ENCODE measurements at regions of chr2 and their contacts with region 1.

Region 1: DNA sequence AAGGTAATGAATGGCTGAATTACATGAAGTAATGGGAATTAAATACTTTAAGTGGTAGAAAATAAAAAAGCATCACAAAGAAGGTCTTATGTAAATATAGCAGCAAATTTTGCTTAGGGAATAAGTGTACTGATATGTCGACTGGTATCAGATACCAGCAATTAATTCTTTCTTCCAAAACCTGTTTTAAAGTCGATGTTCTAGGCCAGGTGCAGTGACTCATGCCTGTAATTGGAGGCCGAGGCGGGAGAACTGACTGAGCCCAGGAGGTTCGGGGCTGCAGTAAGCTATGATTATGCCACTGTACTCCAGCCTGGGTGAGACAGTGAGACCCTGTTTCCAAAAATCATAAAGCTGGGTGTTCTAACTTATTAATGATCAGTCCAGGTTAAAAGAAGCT is 30.3 kb downstream of the SP3 start:
- DNase-seq: no peak
- ATAC-seq: peak; percentile 30
- H3K4me3 Mint-ChIP-seq: no peak overlapping the region
- H3K27ac Mint-ChIP-seq: no peak overlapping the region
- H3K4me1 Mint-ChIP-seq: peaks cover 40% of the 10 kb centered on the region
- H3K27me3 Mint-ChIP-seq: no peaks in the 10 kb centered on the region

Region 2: GRCh38 chr2:173669271-173669853 is 265.5 kb before region 1 on chr2:
- CTCF ChIA-PET with region 1: no interaction called
- POLR2A ChIA-PET with region 1: no interaction called
- intact Hi-C with region 1: no loop called
- DNase-seq: no peak
- ATAC-seq: no peak
- H3K4me3 Mint-ChIP-seq: no peak overlapping the region
- H3K27ac Mint-ChIP-seq: no peak overlapping the region
- H3K4me1 Mint-ChIP-seq: no peaks in the 10 kb centered on the region
- H3K27me3 Mint-ChIP-seq: peaks cover 18% of the 10 kb centered on the region

Region 3: GRCh38 chr2:173922760-173923159 is 12.1 kb before region 1 on chr2:
- CTCF ChIA-PET with region 1: interaction called, 3 read pairs
- POLR2A ChIA-PET with region 1: no interaction called
- intact Hi-C with region 1: loop called in 1 of 2 experiments (anchors 2 kb)
- DNase-seq: no peak
- ATAC-seq: peak; percentile 52
- H3K4me3 Mint-ChIP-seq: no peak overlapping the region
- H3K27ac Mint-ChIP-seq: no peak overlapping the region
- H3K4me1 Mint-ChIP-seq: peaks cover 63% of the 10 kb centered on the region
- H3K27me3 Mint-ChIP-seq: no peaks in the 10 kb centered on the region